HCT116 (cell line): ENCODE measurements at regions of chr22 and their contacts with region 1.

Region 1: GRCh38 chr22:20495861-20496681 is 476 bp upstream of the KLHL22 start:
- DNase-seq: peak; percentile 73
- ATAC-seq: peak; percentile 88
- H3K4me3 ChIP-seq: peak overlapping the region; percentile 47 to 81
- H3K27ac ChIP-seq: peak overlapping the region; percentile 94
- H3K4me1 ChIP-seq: peaks cover 10 to 33% of the 10 kb centered on the region in 2 experiments
- H3K27me3 ChIP-seq: no peaks in the 10 kb centered on the region
- CTCF ChIP-seq: peak; percentile 72 to 97 (median 91)
- POLR2A ChIP-seq: peak; percentile 82
- RAD21 ChIP-seq: peak; percentile 65

Region 2: DNA sequence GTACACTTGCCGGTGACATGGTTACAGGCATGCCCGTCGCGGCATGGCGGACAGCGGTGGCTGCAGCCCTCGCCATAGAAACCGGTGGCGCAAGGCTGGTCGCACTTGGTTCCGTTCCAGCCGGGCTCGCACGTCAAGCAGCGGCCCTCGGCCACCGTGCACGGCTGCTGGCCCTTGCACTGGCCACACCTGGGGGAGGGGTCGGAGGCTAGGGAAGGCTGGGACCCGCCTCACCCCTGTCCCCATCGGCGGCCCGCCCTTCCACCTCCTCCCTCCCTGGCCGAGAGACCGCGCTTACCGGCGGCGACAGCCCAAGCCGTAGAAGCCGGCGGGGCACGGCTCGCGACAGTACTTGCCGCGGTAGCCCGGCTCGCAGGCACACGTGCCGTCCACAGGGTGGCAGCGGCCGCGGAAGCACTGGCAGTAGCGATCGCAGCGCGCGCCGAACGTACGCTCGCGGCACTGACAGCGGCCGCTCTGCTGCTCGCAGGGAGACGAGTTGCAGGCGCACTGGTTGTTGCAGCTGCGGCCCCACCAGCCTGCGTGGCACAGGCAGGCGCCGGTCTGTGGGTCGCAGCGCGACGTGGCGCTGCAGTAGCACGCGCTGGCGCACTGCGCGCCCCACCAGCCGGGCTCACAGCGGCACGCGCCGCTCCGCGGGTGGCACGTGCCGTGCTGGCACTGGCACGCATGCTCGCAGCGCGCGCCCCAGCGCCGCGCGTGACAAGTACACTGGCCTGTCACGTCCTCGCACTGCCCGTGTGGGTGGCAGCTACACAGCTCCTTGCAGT is 65.2 kb before region 1 on chr22:
- CTCF ChIA-PET with region 1: no interaction called
- POLR2A ChIA-PET with region 1: no interaction called
- RAD21 ChIA-PET with region 1: no interaction called
- intact Hi-C with region 1: no loop called
- DNase-seq: peak; percentile 33
- ATAC-seq: peak; percentile 84
- H3K4me3 ChIP-seq: peak overlapping the region; percentile 33 to 52
- H3K27ac ChIP-seq: peak overlapping the region; percentile 3; the same call in 1 of the 2 replicates
- H3K4me1 ChIP-seq: peaks cover 16 to 35% of the 10 kb centered on the region in 2 experiments
- H3K27me3 ChIP-seq: no peaks in the 10 kb centered on the region
- CTCF ChIP-seq: peak; percentile 12 to 57 (median 44); a peak in 4 of 6 replicates
- POLR2A ChIP-seq: no peak
- RAD21 ChIP-seq: no peak

Region 3: DNA sequence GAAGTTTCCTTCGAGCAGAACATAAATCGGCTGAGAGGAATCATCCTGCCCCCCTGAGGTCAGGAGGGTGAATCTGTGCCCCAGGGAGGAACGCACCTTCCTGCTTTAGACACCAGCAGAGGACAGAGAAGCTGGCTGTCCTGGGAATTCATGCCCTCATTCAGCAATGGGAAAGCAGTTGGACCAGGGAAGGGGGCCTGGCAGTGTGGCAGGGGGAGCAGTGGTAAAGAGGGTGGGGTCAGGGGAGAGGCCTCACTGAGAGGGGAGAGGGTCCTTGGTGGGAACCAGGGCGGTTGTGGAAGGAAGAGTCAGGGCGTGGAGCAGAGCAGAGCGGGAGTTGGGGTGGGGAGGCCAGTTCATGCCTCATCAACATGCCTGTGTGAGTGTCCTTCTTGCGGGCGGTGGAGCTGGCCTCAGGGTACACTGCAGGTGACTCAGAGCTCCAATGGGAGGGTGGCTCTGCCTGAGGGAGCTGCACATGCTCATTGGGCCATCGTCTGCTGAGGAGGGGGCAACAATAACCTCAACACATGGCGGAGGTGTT is 34.4 kb after region 1 on chr22:
- CTCF ChIA-PET with region 1: interaction called, 4 read pairs
- POLR2A ChIA-PET with region 1: no interaction called
- RAD21 ChIA-PET with region 1: no interaction called
- intact Hi-C with region 1: loop called (anchors 1 kb)
- DNase-seq: peak; percentile 56
- ATAC-seq: peak; percentile 85
- H3K4me3 ChIP-seq: peak overlapping the region; percentile 13 to 53
- H3K27ac ChIP-seq: peak overlapping the region; percentile 90
- H3K4me1 ChIP-seq: peaks cover 42 to 77% of the 10 kb centered on the region in 2 experiments
- H3K27me3 ChIP-seq: no peaks in the 10 kb centered on the region
- CTCF ChIP-seq: no peak
- POLR2A ChIP-seq: no peak
- RAD21 ChIP-seq: peak; percentile 16; the same call in 1 of the 2 replicates

Region 4: GRCh38 chr22:20542055-20542454 is 46.0 kb after region 1 on chr22:
- CTCF ChIA-PET with region 1: no interaction called
- POLR2A ChIA-PET with region 1: no interaction called
- RAD21 ChIA-PET with region 1: no interaction called
- intact Hi-C with region 1: no loop called
- DNase-seq: no peak
- ATAC-seq: no peak
- H3K4me3 ChIP-seq: no peak overlapping the region
- H3K27ac ChIP-seq: no peak overlapping the region
- H3K4me1 ChIP-seq: no peaks in the 10 kb centered on the region
- H3K27me3 ChIP-seq: no peaks in the 10 kb centered on the region
- CTCF ChIP-seq: no peak
- POLR2A ChIP-seq: no peak
- RAD21 ChIP-seq: no peak